Mammary epithelial cell (primary cell): ENCODE measurements at regions of chr3 and their contacts with region 1.

Region 1: GRCh38 chr3:118550122-118550521 is 484.5 kb downstream of the IGSF11 start:
- DNase-seq: no peak
- H3K4me3 ChIP-seq: no peak overlapping the region
- H3K27ac ChIP-seq: no peak overlapping the region
- H3K4me1 ChIP-seq: peaks cover 26% of the 10 kb centered on the region
- H3K27me3 ChIP-seq: no peaks in the 10 kb centered on the region
- CTCF ChIP-seq: no peak

Region 2: DNA sequence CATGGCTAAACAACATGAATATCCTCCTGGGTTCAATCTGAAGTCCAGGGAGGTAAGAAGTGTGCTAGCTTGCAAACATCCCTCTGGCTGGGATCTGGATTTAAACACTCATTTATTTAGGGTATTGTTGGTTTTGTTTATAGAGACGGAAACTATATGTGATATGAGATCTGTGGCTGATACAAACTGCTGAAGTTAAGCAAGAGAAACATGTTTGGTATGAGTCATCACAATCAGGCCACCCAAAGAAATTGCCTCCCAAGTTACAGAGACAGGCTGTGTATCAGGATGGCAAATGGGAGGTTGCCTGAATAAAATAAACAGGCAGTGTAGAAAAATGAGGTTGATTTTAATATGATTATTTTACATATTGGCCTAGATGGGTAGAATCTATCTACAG is 77.5 kb before region 1 on chr3:
- CTCF ChIA-PET with region 1: no interaction called
- dilution Hi-C with region 1: no loop called
- in situ Hi-C with region 1: no loop called
- intact Hi-C with region 1: no loop called
- DNase-seq: peak; percentile 83
- H3K4me3 ChIP-seq: no peak overlapping the region
- H3K27ac ChIP-seq: no peak overlapping the region
- H3K4me1 ChIP-seq: peaks cover 4% of the 10 kb centered on the region
- H3K27me3 ChIP-seq: no peaks in the 10 kb centered on the region
- CTCF ChIP-seq: no peak

Region 3: GRCh38 chr3:118618247-118619040 is 68.3 kb after region 1 on chr3:
- CTCF ChIA-PET with region 1: no interaction called
- dilution Hi-C with region 1: loop called (anchors 5 kb)
- in situ Hi-C with region 1: no loop called
- intact Hi-C with region 1: loop called (anchors 10 kb)
- DNase-seq: peak; percentile 60
- H3K4me3 ChIP-seq: no peak overlapping the region
- H3K27ac ChIP-seq: no peak overlapping the region
- H3K4me1 ChIP-seq: peaks cover 11% of the 10 kb centered on the region
- H3K27me3 ChIP-seq: no peaks in the 10 kb centered on the region
- CTCF ChIP-seq: no peak

Region 4: GRCh38 chr3:118859950-118860349 is 309.8 kb after region 1 on chr3:
- CTCF ChIA-PET with region 1: no interaction called
- dilution Hi-C with region 1: no loop called
- in situ Hi-C with region 1: no loop called
- intact Hi-C with region 1: no loop called
- DNase-seq: no peak
- H3K4me3 ChIP-seq: no peak overlapping the region
- H3K27ac ChIP-seq: no peak overlapping the region
- H3K4me1 ChIP-seq: no peaks in the 10 kb centered on the region
- H3K27me3 ChIP-seq: no peaks in the 10 kb centered on the region
- CTCF ChIP-seq: no peak